ENCODE measurements at regions of chr11 and their contacts with region 1.

Region 1: GRCh38 chr11:43868852-43869567 is 11.6 kb upstream of the ALKBH3 start:
- DNase-seq: peak; percentile 55
- H3K4me3 Mint-ChIP-seq: no peak overlapping the region
- H3K27ac Mint-ChIP-seq: peak overlapping the region; percentile 38
- H3K4me1 Mint-ChIP-seq: peaks cover 27% of the 10 kb centered on the region
- H3K27me3 Mint-ChIP-seq: peaks cover 52% of the 10 kb centered on the region

Region 2: DNA sequence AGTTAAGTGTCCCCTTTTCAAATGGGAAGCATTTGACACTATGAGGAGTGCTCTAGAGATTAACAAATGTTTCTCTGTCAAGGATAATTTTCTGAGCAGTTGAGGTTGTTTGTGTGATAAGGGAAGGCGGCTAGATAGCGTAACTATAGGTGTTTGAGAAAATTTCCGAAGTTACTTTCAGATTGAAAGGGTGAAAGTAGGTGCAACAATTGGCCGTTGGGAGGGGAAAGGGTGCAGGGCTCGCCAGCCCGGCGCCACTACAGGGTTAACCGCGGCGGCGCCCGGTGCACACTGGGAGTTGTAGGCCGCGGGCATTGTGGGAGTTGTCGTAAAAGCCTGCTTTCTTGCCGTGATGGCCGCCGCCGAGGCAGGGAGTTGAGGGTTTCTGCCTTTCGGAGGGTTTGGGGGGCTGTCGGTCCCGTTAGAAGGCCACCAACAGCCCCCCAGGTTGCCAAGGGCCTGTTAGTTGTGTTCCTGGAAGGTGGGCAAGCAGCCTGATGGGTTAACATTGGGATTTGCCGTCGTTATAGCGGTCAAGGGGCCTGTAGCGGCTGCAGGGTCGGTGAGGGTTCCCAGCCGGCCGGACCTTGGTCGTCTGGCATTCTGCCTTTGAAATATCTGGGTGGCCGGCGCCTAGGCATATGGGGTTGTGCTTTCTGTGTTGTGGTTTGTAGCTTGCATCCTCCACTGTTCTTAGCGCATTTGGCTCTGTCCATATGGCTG is 225.0 kb before region 1 on chr11:
- intact Hi-C with region 1: loop called (anchors 5 kb)
- DNase-seq: peak; percentile 84
- H3K4me3 Mint-ChIP-seq: peak overlapping the region; percentile 96
- H3K27ac Mint-ChIP-seq: peak overlapping the region; percentile 87
- H3K4me1 Mint-ChIP-seq: peaks cover 19% of the 10 kb centered on the region
- H3K27me3 Mint-ChIP-seq: peaks cover 15% of the 10 kb centered on the region

Region 3: GRCh38 chr11:43687120-43687791 is 181.8 kb before region 1 on chr11:
- intact Hi-C with region 1: no loop called
- DNase-seq: no peak
- H3K4me3 Mint-ChIP-seq: no peak overlapping the region
- H3K27ac Mint-ChIP-seq: no peak overlapping the region
- H3K4me1 Mint-ChIP-seq: peaks cover 54% of the 10 kb centered on the region
- H3K27me3 Mint-ChIP-seq: no peaks in the 10 kb centered on the region

Region 4: DNA sequence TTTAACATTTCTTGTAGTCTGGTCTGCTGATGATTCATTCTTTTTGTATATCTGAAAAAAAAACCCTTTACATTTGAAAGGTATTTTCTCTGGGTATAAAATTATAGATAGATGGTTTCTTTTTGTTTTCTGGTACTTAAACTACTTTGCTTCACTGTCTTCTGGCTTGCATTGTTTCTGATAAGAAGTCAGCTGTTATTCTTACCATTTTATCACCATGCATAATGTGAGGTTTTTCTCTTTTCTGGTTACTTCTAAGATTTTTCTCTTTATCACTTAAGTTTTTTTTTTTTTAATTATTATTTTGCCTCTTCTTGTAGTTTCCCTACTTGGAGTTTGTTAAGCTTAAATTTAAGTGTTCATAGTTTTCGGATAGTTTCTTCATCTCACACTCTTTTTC is 103.8 kb before region 1 on chr11:
- intact Hi-C with region 1: no loop called
- DNase-seq: no peak
- H3K4me3 Mint-ChIP-seq: no peak overlapping the region
- H3K27ac Mint-ChIP-seq: no peak overlapping the region
- H3K4me1 Mint-ChIP-seq: no peaks in the 10 kb centered on the region
- H3K27me3 Mint-ChIP-seq: no peaks in the 10 kb centered on the region

Region 5: DNA sequence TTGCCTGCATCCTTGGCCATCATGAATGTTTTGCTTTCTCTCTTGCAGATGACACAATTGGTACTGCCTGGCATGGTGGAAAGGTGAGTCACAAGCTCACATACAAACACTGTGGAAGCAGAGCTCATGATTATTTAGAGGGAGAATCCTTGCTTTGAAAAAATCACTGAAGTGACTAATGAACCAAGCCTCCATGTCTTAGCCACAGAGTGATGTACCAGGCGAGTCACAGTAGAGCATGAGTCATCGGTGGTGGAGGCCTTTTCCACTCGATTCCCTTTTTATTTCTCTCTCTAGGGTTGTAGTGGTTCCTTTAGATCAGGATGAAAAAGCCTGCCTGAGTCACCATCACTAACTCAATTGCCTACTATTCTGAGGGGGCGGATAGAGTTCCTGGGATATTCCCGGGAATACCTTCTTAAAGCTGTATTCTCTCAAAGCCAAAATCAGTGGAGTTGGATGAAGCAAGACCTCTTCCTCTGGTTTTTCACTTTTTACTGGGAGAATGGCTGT is 38.0 kb before region 1 on chr11:
- intact Hi-C with region 1: loop called (anchors 1 kb)
- DNase-seq: no peak
- H3K4me3 Mint-ChIP-seq: no peak overlapping the region
- H3K27ac Mint-ChIP-seq: peak overlapping the region; percentile 91
- H3K4me1 Mint-ChIP-seq: peaks cover 16% of the 10 kb centered on the region
- H3K27me3 Mint-ChIP-seq: no peaks in the 10 kb centered on the region

Region 6: GRCh38 chr11:43920598-43921419 is 51.8 kb after region 1 on chr11:
- intact Hi-C with region 1: loop called (anchors 2 kb)
- DNase-seq: no peak
- H3K4me3 Mint-ChIP-seq: no peak overlapping the region
- H3K27ac Mint-ChIP-seq: no peak overlapping the region
- H3K4me1 Mint-ChIP-seq: peaks cover 9% of the 10 kb centered on the region
- H3K27me3 Mint-ChIP-seq: no peaks in the 10 kb centered on the region

Measured in activated T-helper 2 cell treated with anti-CD3 and anti-CD28 coated beads, Interferon-gamma antibody, Interleukin-2, Interleukin-4, amounts not matched to agents 10 μg/mL and 5 μg/mL and 100 μg/mL, durations not matched to agents 14 hours and 24 hours and 36 hours (primary cell).